WTC11 (cell line): ENCODE measurements at regions of chr1 and their contacts with region 1.

Region 1: DNA sequence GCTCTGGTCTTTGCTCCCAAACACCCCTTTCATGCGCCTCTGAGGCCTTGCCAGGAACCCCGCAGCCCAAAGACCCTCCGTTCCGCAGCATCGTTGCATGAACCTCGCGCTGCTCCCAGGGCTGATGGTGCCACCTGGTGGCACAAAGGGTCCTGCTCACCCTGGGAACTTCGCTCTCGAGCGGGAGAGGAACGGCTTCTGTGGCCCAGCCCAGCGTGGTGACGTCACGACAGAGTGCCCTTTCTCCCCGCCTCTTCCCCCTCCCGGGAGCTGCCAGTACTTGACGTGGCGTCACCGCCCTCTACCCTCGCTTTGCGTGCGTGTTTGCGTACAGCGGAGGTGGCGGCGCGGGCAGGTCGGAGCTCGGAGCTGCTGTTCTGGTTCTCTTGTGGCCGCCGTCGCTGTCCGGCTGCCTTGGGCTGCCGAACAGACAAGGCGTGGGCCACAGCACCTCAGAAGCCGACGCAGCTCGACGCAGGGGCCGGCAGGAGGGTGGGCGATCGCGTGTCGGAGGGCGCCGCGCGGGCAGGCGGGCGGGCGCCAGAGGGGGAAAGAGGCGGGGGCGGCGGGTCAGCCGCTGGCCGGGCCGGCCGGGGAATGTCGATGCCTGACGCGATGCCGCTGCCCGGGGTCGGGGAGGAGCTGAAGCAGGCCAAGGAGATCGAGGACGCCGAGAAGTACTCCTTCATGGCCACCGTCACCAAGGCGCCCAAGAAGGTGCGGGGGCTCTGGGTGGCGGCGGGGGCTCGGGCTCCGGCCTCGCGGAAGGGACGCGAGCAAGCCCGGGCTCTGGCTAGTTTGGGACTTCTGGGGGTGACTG is at the start of gene AHCYL1:
- DNase-seq: peak; percentile 99
- ATAC-seq: peak; percentile 93
- H3K4me3 Mint-ChIP-seq: peak within 1 kb of the TSS; percentile 96
- H3K27ac Mint-ChIP-seq: peak within 1 kb of the TSS; percentile 93
- H3K4me1 Mint-ChIP-seq: peaks cover 42% of the 10 kb centered on the region
- H3K27me3 Mint-ChIP-seq: no peaks in the 10 kb centered on the region; the same call in 1 of the 2 replicates
- CTCF ChIP-seq: peak; percentile 92
- total RNA-seq, gene AHCYL1: 92.1 to 99.4 TPM (median 98.6 TPM) in 3 replicates

Region 2: DNA sequence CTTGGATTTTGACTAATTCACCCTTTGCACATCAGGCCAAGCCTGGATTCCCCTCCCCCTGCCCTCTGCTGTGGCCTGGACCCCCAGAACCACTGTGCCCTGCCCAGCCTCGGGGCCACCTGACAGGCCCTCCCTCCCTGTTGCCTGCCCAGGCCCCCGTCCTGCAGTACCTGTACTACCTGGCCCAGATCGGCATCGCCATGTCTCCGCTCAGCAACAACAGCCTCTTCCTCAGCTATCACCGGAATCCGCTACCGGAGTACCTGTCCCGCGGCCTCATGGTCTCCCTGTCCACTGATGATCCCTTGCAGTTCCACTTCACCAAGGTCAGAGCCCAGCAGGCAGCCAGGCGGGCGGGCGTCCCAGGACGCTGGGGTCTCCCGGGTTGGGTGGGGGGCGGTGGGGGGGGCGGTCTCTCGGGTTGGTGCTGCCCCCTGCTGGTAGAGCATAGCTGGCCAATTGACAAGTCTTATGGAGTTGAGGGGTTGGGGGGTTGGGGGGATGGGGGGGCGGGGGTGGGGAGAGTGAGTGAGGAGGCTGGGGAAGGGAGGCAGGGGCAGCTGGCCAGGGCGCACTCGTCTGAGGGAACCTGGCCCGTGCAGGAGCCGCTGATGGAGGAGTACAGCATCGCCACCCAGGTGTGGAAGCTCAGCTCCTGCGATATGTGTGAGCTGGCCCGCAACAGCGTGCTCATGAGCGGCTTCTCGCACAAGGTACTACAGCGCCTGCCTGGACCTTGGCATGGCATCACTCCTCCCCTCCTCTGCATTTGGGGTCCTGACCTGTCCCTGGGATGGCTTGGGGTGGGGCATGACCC is 354.4 kb before region 1 on chr1:
- CTCF ChIA-PET with region 1: interaction called, 12 read pairs
- POLR2A ChIA-PET with region 1: no interaction called
- DNase-seq: peak; percentile 67
- ATAC-seq: peak; percentile 23
- H3K4me3 Mint-ChIP-seq: no peak overlapping the region
- H3K27ac Mint-ChIP-seq: peak overlapping the region; percentile 57; the same call in 1 of the 2 replicates
- H3K4me1 Mint-ChIP-seq: peaks cover 17% of the 10 kb centered on the region
- H3K27me3 Mint-ChIP-seq: no peaks in the 10 kb centered on the region
- CTCF ChIP-seq: peak; percentile 56; the same call in 1 of the 2 replicates

Region 3: DNA sequence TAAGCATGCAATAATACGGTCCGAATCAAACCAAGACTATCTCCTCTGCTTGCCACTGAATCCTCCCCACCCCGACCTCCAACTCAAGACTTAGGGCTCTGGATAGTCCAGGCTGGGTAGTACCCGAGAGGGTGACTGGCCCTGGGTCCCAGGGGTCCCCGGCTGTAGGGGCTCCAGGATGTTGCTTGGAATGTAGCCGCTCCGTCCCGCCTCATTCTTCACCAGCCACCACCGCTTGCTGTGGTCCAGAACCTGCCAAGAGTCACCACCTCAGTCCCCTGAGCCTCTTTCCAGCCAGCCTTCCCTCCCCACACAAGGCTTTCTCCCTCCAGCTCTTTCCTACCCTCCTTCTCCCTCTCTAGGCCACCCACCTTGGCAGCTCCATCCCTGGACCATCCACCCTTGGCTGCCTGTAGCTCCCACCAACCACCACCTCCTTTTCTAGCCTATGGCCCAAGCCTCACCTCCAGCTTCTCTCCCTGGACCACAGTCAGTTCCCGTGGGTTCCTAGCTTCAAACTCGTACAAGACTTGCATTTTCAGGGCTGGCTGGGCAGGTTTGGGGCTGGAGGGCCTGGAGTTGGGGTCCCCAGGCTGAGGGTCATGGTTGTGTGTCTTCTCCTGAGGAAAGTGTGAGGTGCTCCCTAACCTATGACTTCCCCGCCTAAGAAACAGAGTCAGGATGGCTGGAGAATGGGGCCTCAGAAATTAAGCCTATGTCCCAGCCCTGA is 233.0 kb before region 1 on chr1:
- CTCF ChIA-PET with region 1: interaction called, 10 read pairs
- POLR2A ChIA-PET with region 1: no interaction called
- DNase-seq: no peak
- ATAC-seq: no peak
- H3K4me3 Mint-ChIP-seq: no peak overlapping the region
- H3K27ac Mint-ChIP-seq: no peak overlapping the region
- H3K4me1 Mint-ChIP-seq: no peaks in the 10 kb centered on the region
- H3K27me3 Mint-ChIP-seq: peaks cover 19% of the 10 kb centered on the region
- CTCF ChIP-seq: no peak

Region 4: GRCh38 chr1:109827466-109827865 is 157.2 kb before region 1 on chr1:
- CTCF ChIA-PET with region 1: interaction called, 13 read pairs
- POLR2A ChIA-PET with region 1: no interaction called
- DNase-seq: no peak
- ATAC-seq: no peak
- H3K4me3 Mint-ChIP-seq: no peak overlapping the region
- H3K27ac Mint-ChIP-seq: no peak overlapping the region
- H3K4me1 Mint-ChIP-seq: peaks cover 22% of the 10 kb centered on the region
- H3K27me3 Mint-ChIP-seq: peaks cover 3% of the 10 kb centered on the region; the same call in 1 of the 2 replicates
- CTCF ChIP-seq: no peak

Region 5: GRCh38 chr1:109910123-109910962 is 74.3 kb before region 1 on chr1 and contains the start of gene CSF1:
- CTCF ChIA-PET with region 1: interaction called, 15 read pairs
- POLR2A ChIA-PET with region 1: no interaction called
- DNase-seq: peak; percentile 55
- ATAC-seq: peak; percentile 62
- H3K4me3 Mint-ChIP-seq: peak within 1 kb of the TSS; percentile 82
- H3K27ac Mint-ChIP-seq: no peak within 1 kb of the TSS
- H3K4me1 Mint-ChIP-seq: peaks cover 31% of the 10 kb centered on the region
- H3K27me3 Mint-ChIP-seq: peaks cover 56% of the 10 kb centered on the region
- CTCF ChIP-seq: no peak
- total RNA-seq, gene CSF1: 2.5 to 3.3 TPM (median 3.0 TPM) in 3 replicates

Region 6: DNA sequence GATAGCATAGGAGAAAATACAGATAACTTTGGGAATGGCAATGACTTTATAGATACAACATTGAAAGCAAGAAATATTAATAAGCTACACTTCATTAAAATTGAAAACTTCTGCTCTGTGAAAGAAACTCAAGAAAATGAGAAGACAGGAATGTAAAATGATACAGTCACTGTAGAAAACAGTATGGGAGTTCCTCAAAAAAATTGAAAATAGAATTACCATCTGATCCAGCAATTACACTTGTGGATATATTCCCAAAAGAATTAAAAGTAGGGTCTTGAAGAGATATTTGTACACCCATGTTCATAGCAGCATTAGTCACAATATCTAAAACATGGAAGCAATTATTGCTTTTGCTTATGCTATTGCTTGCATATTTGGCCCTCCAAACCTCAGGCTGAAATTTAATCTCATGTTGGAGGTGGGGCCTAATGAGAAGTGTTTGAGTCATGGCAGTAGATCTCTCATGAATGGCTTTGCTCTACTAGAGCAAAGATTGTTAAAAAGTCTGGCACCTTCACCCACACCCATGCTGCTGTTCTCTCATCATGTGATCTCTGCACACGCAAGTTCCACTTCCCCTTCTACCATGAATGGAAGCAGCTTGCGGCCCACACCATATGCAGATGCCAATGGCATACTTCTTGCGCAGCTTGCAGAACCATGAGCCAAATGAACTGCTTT is 15.4 kb before region 1 on chr1:
- CTCF ChIA-PET with region 1: interaction called, 16 read pairs
- POLR2A ChIA-PET with region 1: no interaction called
- DNase-seq: no peak
- ATAC-seq: no peak
- H3K4me3 Mint-ChIP-seq: no peak overlapping the region
- H3K27ac Mint-ChIP-seq: no peak overlapping the region
- H3K4me1 Mint-ChIP-seq: no peaks in the 10 kb centered on the region
- H3K27me3 Mint-ChIP-seq: peaks cover 7% of the 10 kb centered on the region
- CTCF ChIP-seq: no peak